ENCODE measurements at regions of chr10 and their contacts with region 1.

Region 1: DNA sequence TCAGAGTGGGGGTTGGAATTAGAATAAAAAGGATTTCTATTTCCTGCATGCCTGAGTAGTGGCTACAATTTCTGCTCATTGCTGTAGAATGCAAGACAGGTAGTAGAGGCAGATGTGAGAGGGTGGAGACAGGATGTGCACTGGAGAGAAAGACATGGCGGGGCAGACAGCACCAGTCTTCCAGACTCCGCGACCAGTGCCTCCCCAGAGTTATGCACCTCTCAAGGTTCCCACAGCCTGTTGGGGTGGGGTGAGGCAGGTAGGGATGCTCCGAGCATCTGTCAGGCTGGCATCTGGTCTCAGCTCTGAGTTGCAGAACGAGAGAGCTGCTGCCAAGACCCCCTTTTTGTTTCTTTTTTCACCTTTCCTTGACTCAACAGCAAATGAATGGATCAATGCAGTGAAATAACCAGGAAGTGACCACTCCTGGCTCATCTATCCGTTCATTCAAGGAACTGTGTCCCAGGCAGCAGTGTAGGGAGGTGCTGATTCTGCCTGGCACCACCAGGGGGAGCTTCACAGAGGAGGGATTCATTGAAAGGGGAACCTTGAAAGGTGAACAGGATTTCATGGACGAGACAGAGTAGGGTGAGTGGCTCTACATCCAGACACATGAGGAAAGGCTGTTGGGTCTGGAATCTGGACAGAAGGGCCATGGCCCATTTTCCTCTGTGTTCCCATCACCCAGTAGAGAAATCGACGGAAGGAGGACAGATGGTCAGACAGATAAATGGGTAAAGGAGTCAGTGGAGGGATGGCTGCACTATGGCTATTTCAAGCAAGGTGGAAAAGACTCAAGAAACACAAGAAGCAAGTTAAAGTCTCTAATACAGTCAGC is 17.2 kb upstream of the SLC18A3 start:
- DNase-seq: peak; percentile 63
- H3K4me3 Mint-ChIP-seq: no peak overlapping the region
- H3K27ac Mint-ChIP-seq: no peak overlapping the region
- H3K4me1 Mint-ChIP-seq: no peaks in the 10 kb centered on the region
- H3K27me3 Mint-ChIP-seq: peaks cover 23% of the 10 kb centered on the region

Region 2: DNA sequence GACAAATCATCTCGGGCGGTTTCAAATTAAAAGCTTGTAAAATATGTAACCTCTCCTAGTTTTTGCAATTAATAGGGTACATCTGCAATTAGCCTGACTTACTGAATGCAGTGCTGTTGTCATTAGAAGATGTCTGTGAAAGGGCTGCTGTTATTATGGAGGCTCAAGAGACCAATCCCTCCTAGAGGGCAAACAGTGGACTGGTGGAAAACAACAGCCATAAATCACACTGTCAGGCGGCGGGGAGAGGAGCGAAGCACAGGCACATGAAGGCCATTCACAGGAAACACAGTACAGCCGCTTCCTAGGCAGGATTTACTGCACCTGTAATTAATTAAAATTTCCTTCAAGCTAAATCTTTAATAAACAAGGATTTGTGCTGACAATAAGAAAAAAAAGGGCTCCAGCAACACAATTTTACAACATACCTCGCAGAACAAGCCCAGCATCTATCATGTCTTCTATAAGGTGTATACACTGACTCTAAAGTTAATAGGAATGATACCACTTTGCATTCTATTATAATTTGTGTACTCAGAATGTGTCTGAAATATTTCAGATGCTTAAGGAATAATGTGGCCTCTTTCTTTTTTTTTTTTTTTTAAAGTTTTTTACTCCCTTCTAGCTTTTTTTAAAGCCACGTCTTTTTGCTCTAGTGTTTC is 104.8 kb before region 1 on chr10:
- CTCF ChIA-PET with region 1: no interaction called
- POLR2A ChIA-PET with region 1: no interaction called
- intact Hi-C with region 1: no loop called
- DNase-seq: no peak
- H3K4me3 Mint-ChIP-seq: no peak overlapping the region
- H3K27ac Mint-ChIP-seq: no peak overlapping the region
- H3K4me1 Mint-ChIP-seq: peaks cover 4% of the 10 kb centered on the region
- H3K27me3 Mint-ChIP-seq: no peaks in the 10 kb centered on the region

Region 3: GRCh38 chr10:49571388-49571787 is 21.6 kb before region 1 on chr10:
- CTCF ChIA-PET with region 1: no interaction called
- POLR2A ChIA-PET with region 1: no interaction called
- intact Hi-C with region 1: no loop called
- DNase-seq: no peak
- H3K4me3 Mint-ChIP-seq: no peak overlapping the region
- H3K27ac Mint-ChIP-seq: no peak overlapping the region
- H3K4me1 Mint-ChIP-seq: no peaks in the 10 kb centered on the region
- H3K27me3 Mint-ChIP-seq: peaks cover 9% of the 10 kb centered on the region

Region 4: GRCh38 chr10:49734661-49735071 is 141.7 kb after region 1 on chr10:
- CTCF ChIA-PET with region 1: no interaction called
- POLR2A ChIA-PET with region 1: no interaction called
- intact Hi-C with region 1: no loop called
- DNase-seq: no peak
- H3K4me3 Mint-ChIP-seq: no peak overlapping the region
- H3K27ac Mint-ChIP-seq: no peak overlapping the region
- H3K4me1 Mint-ChIP-seq: no peaks in the 10 kb centered on the region
- H3K27me3 Mint-ChIP-seq: no peaks in the 10 kb centered on the region

Region 5: DNA sequence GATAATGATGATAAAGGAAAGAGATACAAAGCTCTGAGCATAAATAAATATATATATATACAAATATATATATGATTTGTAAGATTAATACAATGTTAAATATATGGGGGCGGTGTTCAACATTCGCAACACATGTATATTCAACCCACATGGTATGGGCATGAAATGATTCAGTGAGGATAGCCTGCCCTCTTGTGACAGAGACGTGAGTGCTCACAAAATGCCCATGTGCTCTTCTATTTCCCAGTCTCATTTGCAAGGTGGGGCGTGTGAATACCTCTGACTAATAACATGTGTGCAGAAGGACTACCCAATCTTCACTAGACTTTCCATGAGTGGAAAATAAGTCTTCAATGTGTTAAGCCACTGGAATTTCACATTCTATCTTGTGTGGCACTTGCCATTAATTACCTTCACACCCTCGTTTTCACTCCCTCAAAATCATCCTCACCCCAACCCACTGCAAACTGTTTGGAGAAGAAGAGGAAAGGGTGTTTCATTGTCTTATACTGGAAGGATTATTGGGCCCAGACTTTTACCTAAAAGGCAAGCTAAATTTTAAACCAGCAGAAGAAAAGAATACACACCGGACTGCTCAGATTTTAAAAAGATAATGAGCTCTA is 631.5 kb after region 1 on chr10:
- CTCF ChIA-PET with region 1: interaction called, 9 read pairs
- POLR2A ChIA-PET with region 1: no interaction called
- intact Hi-C with region 1: loop called (anchors 1 kb)
- DNase-seq: peak; percentile 39
- H3K4me3 Mint-ChIP-seq: no peak overlapping the region
- H3K27ac Mint-ChIP-seq: no peak overlapping the region
- H3K4me1 Mint-ChIP-seq: peaks cover 3% of the 10 kb centered on the region
- H3K27me3 Mint-ChIP-seq: peaks cover 14% of the 10 kb centered on the region

Region 6: DNA sequence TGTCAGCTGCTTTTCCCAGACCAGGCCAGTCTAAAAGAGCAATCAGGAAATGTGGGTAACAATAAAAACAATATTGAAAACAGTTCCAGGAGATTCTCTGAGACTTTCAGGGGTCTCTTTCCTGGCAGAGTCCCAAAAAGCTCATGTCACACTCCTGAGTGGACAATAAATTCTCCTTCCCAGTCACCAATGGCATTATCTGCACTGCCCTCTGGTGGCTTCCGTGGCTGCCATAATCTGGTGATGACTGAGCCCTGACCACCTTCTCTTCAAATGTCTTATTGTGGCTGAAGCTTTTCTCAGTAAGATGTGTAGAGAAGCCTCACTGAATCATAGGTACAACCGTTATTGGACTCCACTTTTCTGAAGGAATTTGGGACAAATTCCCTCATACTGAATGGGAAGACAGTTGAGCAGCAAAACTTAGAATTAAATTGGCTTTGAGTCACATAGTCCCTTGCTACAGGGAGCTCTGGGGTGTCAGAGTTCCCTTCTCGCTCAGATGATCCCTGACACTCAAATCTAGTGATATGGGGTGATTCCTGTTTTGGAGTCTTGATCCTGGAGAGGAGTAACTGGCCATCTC is 682.8 kb after region 1 on chr10:
- CTCF ChIA-PET with region 1: no interaction called
- POLR2A ChIA-PET with region 1: no interaction called
- intact Hi-C with region 1: loop called (anchors 5 kb)
- DNase-seq: peak; percentile 57
- H3K4me3 Mint-ChIP-seq: no peak overlapping the region
- H3K27ac Mint-ChIP-seq: no peak overlapping the region
- H3K4me1 Mint-ChIP-seq: no peaks in the 10 kb centered on the region
- H3K27me3 Mint-ChIP-seq: peaks cover 13% of the 10 kb centered on the region